ENCODE measurements at regions of chr7 and their contacts with region 1.

Region 1: GRCh38 chr7:99990460-99990852 is 14.6 kb upstream of the AZGP1 start:
- DNase-seq: no peak
- H3K4me3 Mint-ChIP-seq: no peak overlapping the region
- H3K27ac Mint-ChIP-seq: no peak overlapping the region
- H3K4me1 Mint-ChIP-seq: no peaks in the 10 kb centered on the region
- H3K27me3 Mint-ChIP-seq: no peaks in the 10 kb centered on the region
- CTCF ChIP-seq: no peak

Region 2: DNA sequence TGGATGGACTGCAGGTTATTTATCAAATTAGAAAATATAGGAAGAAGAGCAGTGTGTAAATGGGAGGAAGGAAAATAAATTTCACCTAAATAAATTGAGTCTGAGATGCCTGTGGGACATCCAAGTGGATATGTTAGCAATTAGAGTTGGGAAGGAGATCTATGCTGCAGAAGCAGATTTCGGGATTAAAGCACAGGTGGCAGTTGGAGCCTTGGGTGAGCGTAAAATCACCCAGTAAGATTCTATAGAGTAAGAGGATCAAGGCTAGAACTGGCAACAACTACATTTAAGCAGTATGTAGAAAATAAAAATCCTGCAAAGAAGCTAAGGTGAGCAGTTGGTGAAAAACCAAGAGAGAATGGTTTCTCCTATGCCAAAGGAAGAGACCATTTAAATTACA is 79.5 kb before region 1 on chr7:
- CTCF ChIA-PET with region 1: interaction called, 214 read pairs
- POLR2A ChIA-PET with region 1: interaction called, 6 read pairs
- intact Hi-C with region 1: loop called (anchors 1 kb)
- DNase-seq: no peak
- H3K4me3 Mint-ChIP-seq: no peak overlapping the region
- H3K27ac Mint-ChIP-seq: no peak overlapping the region
- H3K4me1 Mint-ChIP-seq: peaks cover 34% of the 10 kb centered on the region
- H3K27me3 Mint-ChIP-seq: no peaks in the 10 kb centered on the region
- CTCF ChIP-seq: no peak

Region 3: GRCh38 chr7:99975782-99976521 is 14.5 kb before region 1 on chr7 and contains the start of gene AZGP1:
- CTCF ChIA-PET with region 1: interaction called, 48 read pairs
- POLR2A ChIA-PET with region 1: interaction called, 4 read pairs
- intact Hi-C with region 1: no loop called
- DNase-seq: peak; percentile 33
- H3K4me3 Mint-ChIP-seq: no peak within 1 kb of the TSS
- H3K27ac Mint-ChIP-seq: no peak within 1 kb of the TSS
- H3K4me1 Mint-ChIP-seq: peaks cover 13% of the 10 kb centered on the region
- H3K27me3 Mint-ChIP-seq: no peaks in the 10 kb centered on the region
- CTCF ChIP-seq: no peak
- total RNA-seq, gene AZGP1: 0.58 and 0.59 TPM in 2 replicates

Region 4: GRCh38 chr7:100015232-100016209 is 25.1 kb after region 1 on chr7 and contains the start of gene ZKSCAN1:
- CTCF ChIA-PET with region 1: interaction called, 10 read pairs
- POLR2A ChIA-PET with region 1: interaction called, 23 read pairs
- intact Hi-C with region 1: no loop called
- DNase-seq: peak; percentile 95
- H3K4me3 Mint-ChIP-seq: peak within 1 kb of the TSS; percentile 80
- H3K27ac Mint-ChIP-seq: peak within 1 kb of the TSS; percentile 76
- H3K4me1 Mint-ChIP-seq: peaks cover 12% of the 10 kb centered on the region
- H3K27me3 Mint-ChIP-seq: no peaks in the 10 kb centered on the region
- CTCF ChIP-seq: no peak
- total RNA-seq, gene ZKSCAN1: 80.2 and 86.2 TPM in 2 replicates

Region 5: DNA sequence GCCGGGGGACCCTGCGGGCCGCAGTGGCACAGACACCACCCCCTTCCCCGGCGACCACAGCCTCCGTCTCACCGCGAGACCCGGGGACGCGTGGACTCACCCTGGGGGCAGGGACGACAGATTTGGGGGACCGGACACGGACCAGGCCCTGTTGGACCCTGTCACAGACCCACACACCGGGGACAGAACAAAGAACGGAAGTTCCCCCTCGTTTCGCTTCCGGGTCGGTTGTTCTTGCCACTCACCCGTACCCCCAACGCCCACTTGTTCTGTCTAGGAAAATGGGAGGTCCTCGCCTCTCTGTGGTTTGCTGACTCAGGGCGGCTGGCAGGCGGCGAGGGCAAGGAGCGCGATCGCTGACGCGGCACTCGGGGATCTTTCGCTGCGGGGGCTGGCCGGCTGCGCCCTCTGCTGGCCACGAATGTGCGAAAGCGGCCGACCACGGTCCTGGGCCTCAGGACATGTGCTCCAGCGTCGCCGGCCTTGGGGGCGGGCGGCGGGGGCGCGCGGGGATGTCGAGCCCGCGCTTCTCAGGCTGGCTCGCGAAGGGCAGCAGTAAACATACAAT is 91.2 kb after region 1 on chr7 and contains the start of gene ZNF3:
- CTCF ChIA-PET with region 1: interaction called, 14 read pairs
- POLR2A ChIA-PET with region 1: interaction called, 4 read pairs
- intact Hi-C with region 1: loop called (anchors 1 kb)
- DNase-seq: peak; percentile 99
- H3K4me3 Mint-ChIP-seq: peak within 1 kb of the TSS; percentile 84
- H3K27ac Mint-ChIP-seq: peak within 1 kb of the TSS; percentile 74
- H3K4me1 Mint-ChIP-seq: peaks cover 6% of the 10 kb centered on the region
- H3K27me3 Mint-ChIP-seq: no peaks in the 10 kb centered on the region
- CTCF ChIP-seq: peak; percentile 82
- total RNA-seq, gene ZNF3: 23.7 and 24.8 TPM in 2 replicates

Region 6: GRCh38 chr7:100132697-100133151 is 142.3 kb after region 1 on chr7:
- CTCF ChIA-PET with region 1: interaction called, 10 read pairs
- POLR2A ChIA-PET with region 1: no interaction called
- intact Hi-C with region 1: loop called (anchors 5 kb)
- DNase-seq: peak; percentile 71
- H3K4me3 Mint-ChIP-seq: no peak overlapping the region
- H3K27ac Mint-ChIP-seq: no peak overlapping the region
- H3K4me1 Mint-ChIP-seq: peaks cover 11% of the 10 kb centered on the region
- H3K27me3 Mint-ChIP-seq: peaks cover 10% of the 10 kb centered on the region
- CTCF ChIP-seq: peak; percentile 93